Stomach (tissue), 19 donors: ENCODE measurements at regions of chr4 and their contacts with region 1.

Region 1: GRCh38 chr4:54318904-54319303 is 89.8 kb downstream of the PDGFRA start:
- DNase-seq: peak in 1 of 2 donors; percentile 58
- H3K4me3 ChIP-seq: no peak overlapping the region
- H3K27ac ChIP-seq: no peak overlapping the region
- H3K4me1 ChIP-seq: no peaks in the 10 kb centered on the region
- H3K27me3 ChIP-seq: no peaks in the 10 kb centered on the region
- CTCF ChIP-seq: peak in 4 of 7 experiments; percentile 21 to 53 (median 49)
- EP300 ChIP-seq: no peak
- POLR2A ChIP-seq: no peak

Region 2: DNA sequence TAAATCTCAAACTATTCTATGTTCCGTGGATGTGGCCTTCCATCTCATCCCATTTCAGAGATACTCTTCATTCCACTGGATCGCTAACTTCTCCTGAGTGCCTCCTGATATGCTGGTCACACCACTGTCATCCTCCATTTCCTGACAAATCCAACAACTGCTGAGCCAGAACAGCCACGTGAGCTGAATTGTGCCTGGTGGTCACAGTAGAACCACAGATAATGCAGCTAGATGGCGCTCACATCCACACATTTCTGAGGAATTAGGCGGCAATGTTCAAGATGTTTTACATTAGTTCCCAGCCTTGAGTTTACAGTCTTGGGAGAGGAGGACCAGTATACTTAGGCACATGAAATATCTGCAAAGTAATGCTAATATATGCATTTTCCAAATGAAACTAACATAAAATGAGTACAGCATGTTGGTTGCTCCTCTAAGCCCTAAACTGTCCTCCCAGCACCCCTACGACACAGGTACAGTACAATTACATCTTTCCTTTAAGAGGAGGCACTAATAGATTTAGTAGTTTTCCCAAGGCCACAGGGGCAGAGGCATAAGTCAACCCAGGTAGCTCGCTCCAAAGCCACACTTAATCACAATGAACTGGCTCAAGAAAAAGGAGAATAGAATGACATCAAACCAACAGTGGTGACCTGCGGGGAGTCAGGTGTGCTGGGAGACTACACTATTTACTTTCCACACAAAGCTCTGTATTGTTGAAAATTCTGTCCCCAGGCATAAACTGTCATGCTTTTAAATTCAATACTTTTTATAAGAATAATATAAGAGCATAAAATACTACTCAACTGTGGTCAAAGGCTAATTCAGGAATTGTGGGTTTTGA is 388.7 kb before region 1 on chr4:
- intact Hi-C with region 1: no loop called
- DNase-seq: peak; percentile 73 to 94
- H3K4me3 ChIP-seq: no peak overlapping the region
- H3K27ac ChIP-seq: no peak overlapping the region
- H3K4me1 ChIP-seq: peaks cover 0 to 6% (median 3%) of the 10 kb centered on the region in 4 donors
- H3K27me3 ChIP-seq: peaks cover 0 to 25% (median 0%) of the 10 kb centered on the region in 3 donors
- CTCF ChIP-seq: peak in 5 of 7 experiments; percentile 59 to 87 (median 66)
- EP300 ChIP-seq: no peak
- POLR2A ChIP-seq: no peak

Region 3: DNA sequence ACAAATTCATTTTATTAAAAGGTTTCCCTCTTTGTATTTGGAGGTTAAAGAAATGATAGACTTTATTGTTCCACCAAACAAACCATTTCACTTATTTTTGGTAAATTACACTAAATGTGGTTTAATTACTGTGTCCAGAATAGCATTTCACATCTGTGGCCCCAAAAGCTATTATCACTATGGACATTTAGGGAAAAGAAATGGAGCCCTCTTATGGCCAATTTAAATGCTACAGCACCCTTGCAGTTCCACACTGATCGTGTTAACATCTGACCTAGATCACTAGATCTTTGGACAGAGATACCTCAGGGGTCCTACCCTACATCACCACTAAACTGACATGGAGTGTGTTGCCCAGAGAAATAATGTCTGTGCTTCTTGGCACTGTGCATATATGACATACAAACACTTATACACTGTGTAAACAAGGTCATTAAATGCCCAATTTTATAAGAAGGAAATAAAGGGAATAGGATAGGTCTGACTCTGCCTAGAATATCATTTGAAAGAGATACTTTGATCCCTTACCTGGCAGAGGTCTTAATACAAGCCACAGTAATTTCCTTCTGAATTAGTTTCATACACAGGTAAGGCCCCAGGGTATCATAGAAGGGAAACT is 642.6 kb after region 1 on chr4:
- intact Hi-C with region 1: loop called (anchors 10 kb)
- DNase-seq: peak in 1 of 2 donors; percentile 52
- H3K4me3 ChIP-seq: no peak overlapping the region
- H3K27ac ChIP-seq: no peak overlapping the region
- H3K4me1 ChIP-seq: no peaks in the 10 kb centered on the region
- H3K27me3 ChIP-seq: no peaks in the 10 kb centered on the region
- CTCF ChIP-seq: peak in 4 of 7 experiments; percentile 6 to 46 (median 28)
- EP300 ChIP-seq: no peak
- POLR2A ChIP-seq: no peak